CD4-positive, alpha-beta T cell (primary cell): ENCODE measurements at regions of chr6 and their contacts with region 1.

Region 1: DNA sequence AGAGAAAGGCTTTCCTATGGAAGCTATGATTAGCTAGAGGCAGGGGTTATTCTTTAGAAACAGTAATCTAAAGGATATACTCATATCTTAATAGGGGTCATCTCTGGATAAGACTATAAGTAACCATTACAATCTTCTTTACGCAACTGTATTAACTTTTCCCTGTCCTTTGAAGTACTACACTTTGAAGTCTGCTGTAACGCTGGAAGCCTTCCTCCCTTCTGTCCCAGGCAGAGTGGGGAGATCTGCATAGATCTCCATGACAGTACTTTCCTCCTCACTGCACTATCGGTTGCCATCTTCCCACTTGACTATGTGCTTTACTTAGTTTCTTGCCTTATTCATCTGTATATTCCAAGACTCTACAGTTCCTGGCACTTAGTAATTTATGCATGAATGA is 20.1 kb downstream of the SLC35B3 start:
- DNase-seq: no peak
- ATAC-seq: no peak
- H3K4me3 ChIP-seq: no peak overlapping the region
- H3K4me3 Mint-ChIP-seq: no peak overlapping the region
- H3K27ac ChIP-seq: no peak overlapping the region
- H3K27ac Mint-ChIP-seq: no peak overlapping the region
- H3K4me1 ChIP-seq: no peaks in the 10 kb centered on the region
- H3K4me1 Mint-ChIP-seq: no peaks in the 10 kb centered on the region
- H3K27me3 ChIP-seq: no peaks in the 10 kb centered on the region
- H3K27me3 Mint-ChIP-seq: no peaks in the 10 kb centered on the region
- CTCF ChIP-seq: no peak

Region 2: GRCh38 chr6:7827142-7827541 is 588.1 kb before region 1 on chr6:
- CTCF ChIA-PET with region 1: no interaction called
- POLR2A ChIA-PET with region 1: no interaction called
- intact Hi-C with region 1: no loop called
- DNase-seq: no peak
- ATAC-seq: no peak
- H3K4me3 ChIP-seq: no peak overlapping the region
- H3K4me3 Mint-ChIP-seq: no peak overlapping the region
- H3K27ac ChIP-seq: no peak overlapping the region
- H3K27ac Mint-ChIP-seq: no peak overlapping the region
- H3K4me1 ChIP-seq: no peaks in the 10 kb centered on the region
- H3K4me1 Mint-ChIP-seq: no peaks in the 10 kb centered on the region
- H3K27me3 ChIP-seq: peaks cover 0 to 3% of the 10 kb centered on the region in 2 experiments
- H3K27me3 Mint-ChIP-seq: peaks cover 22% of the 10 kb centered on the region
- CTCF ChIP-seq: no peak

Region 3: GRCh38 chr6:8229915-8230756 is 185.1 kb before region 1 on chr6:
- CTCF ChIA-PET with region 1: no interaction called
- POLR2A ChIA-PET with region 1: no interaction called
- intact Hi-C with region 1: no loop called
- DNase-seq: no peak
- ATAC-seq: no peak
- H3K4me3 ChIP-seq: no peak overlapping the region
- H3K4me3 Mint-ChIP-seq: no peak overlapping the region
- H3K27ac ChIP-seq: no peak overlapping the region
- H3K27ac Mint-ChIP-seq: no peak overlapping the region
- H3K4me1 ChIP-seq: no peaks in the 10 kb centered on the region
- H3K4me1 Mint-ChIP-seq: no peaks in the 10 kb centered on the region
- H3K27me3 ChIP-seq: peaks cover 0 to 5% of the 10 kb centered on the region in 2 experiments
- H3K27me3 Mint-ChIP-seq: peaks cover 19% of the 10 kb centered on the region
- CTCF ChIP-seq: no peak

Region 4: DNA sequence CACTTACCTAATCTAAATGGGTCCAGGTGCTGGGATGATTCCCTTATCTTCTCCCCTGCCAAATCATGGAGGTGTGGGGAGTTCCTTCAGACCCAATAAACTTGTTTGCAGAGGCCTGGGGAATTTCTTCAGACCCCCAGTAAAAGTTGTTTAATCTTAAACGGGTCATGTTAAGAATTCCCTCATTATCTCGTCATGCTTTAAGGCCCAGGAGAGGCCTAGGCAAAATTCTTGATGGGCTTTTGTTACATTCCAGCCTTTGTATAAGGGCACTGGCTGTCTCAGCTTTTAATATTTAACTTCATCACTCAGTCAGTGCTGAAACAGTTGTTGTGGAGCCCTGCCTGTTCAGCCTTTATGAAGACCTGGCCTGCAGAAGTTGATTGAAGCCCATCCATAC is 31.1 kb after region 1 on chr6:
- CTCF ChIA-PET with region 1: interaction called, 3 read pairs
- POLR2A ChIA-PET with region 1: no interaction called
- intact Hi-C with region 1: loop called in 1 of 2 experiments (anchors 5 kb)
- DNase-seq: no peak
- ATAC-seq: no peak
- H3K4me3 ChIP-seq: no peak overlapping the region
- H3K4me3 Mint-ChIP-seq: no peak overlapping the region
- H3K27ac ChIP-seq: no peak overlapping the region
- H3K27ac Mint-ChIP-seq: no peak overlapping the region
- H3K4me1 ChIP-seq: no peaks in the 10 kb centered on the region
- H3K4me1 Mint-ChIP-seq: no peaks in the 10 kb centered on the region
- H3K27me3 ChIP-seq: no peaks in the 10 kb centered on the region
- H3K27me3 Mint-ChIP-seq: no peaks in the 10 kb centered on the region
- CTCF ChIP-seq: no peak